ENCODE measurements at regions of chr17 and their contacts with region 1.

Region 1: GRCh38 chr17:59155439-59156182 is at the start of gene PRR11:
- DNase-seq: peak; percentile 96
- ATAC-seq: peak; percentile 98
- total RNA-seq, gene PRR11: 1.5 TPM

Region 2: GRCh38 chr17:59106463-59107305 is 48.9 kb before region 1 on chr17 and contains the start of gene TRIM37:
- intact Hi-C with region 1: loop called (anchors 10 kb)
- DNase-seq: peak; percentile 99
- ATAC-seq: peak; percentile 99
- total RNA-seq, gene TRIM37: 20.2 TPM

Region 3: GRCh38 chr17:59361916-59362810 is 206.6 kb after region 1 on chr17:
- intact Hi-C with region 1: loop called (anchors 10 kb)
- DNase-seq: no peak
- ATAC-seq: no peak

Measured in Right ventricle myocardium inferior (tissue), 1 donor.